ENCODE measurements at regions of chr17 and their contacts with region 1.

Region 1: DNA sequence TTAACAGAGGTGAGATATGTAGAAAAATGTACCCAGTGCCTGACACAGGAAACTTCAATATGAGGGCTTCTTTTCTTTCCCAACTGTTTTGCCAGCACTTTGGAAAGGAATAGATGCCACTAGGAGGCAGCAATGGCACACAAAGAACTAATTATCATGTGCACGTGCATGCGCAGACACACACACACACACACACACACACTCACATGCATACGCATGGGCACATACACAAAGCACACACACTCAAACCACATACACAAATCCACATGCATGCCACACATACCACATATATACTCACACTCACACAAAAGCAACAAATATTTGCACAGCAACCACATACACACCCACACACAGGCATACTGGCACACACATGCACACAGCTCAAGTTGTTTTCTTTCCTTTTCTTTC is 8.8 kb upstream of the CEP112 start:
- DNase-seq: peak; percentile 90
- H3K4me3 ChIP-seq: no peak overlapping the region
- H3K27ac ChIP-seq: no peak overlapping the region
- H3K4me1 ChIP-seq: peaks cover 14% of the 10 kb centered on the region
- H3K27me3 ChIP-seq: no peaks in the 10 kb centered on the region
- CTCF ChIP-seq: peak; percentile 87

Region 2: DNA sequence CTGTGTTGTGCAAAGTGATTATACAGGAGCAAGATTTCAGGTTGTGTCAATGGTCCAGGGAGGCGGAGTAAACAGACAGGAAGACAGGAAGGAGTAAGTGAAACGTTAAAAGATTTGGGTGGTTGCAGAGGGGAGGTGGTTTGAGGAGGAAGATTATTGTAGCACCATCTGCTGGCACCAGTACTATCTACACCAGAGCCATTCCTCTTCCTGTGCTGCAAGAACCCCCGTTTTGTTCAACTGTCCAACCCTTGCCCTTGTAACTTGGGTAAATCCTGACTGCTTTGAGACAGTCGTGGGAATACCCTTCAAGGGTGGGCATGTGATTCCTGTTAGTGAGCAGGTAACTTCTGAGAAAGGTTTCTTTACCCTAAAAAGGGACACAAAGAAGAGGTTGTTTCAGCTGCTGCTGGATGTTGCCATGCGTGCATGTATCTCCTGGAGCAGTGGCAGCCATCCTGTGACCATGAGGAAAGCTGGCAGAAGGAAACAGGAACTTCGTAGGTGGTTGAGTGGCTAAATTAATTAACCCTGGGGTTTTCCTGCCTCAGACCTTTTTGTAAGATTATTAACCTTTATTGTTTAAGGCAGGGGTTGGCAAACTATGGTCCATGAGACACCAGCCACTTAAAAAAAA is 225.8 kb after region 1 on chr17:
- CTCF ChIA-PET with region 1: no interaction called
- POLR2A ChIA-PET with region 1: no interaction called
- intact Hi-C with region 1: loop called (anchors 5 kb)
- DNase-seq: peak; percentile 75
- H3K4me3 ChIP-seq: no peak overlapping the region
- H3K27ac ChIP-seq: no peak overlapping the region
- H3K4me1 ChIP-seq: peaks cover 17% of the 10 kb centered on the region
- H3K27me3 ChIP-seq: no peaks in the 10 kb centered on the region
- CTCF ChIP-seq: peak; percentile 67

Region 3: DNA sequence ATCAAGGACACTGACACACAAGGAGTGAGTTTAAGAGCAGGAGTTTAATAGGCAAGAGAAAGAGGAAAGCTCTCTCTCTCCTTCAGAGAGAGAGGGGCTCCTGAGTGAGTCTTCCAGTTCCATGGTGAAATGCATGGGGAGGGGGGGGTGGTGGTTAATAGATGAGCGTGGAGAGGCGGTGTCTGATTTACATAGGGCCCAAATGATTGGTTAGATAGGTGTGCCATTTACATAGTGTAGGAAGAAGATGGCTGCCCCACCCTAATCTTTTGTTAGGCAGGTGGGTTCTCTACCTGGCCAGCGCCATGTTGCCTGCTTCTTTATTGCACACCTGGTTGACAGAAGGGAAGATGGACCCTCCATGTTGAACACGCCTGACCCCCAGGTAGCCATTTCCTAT is 384.2 kb after region 1 on chr17:
- CTCF ChIA-PET with region 1: interaction called, 13 read pairs
- POLR2A ChIA-PET with region 1: no interaction called
- intact Hi-C with region 1: no loop called
- DNase-seq: no peak
- H3K4me3 ChIP-seq: no peak overlapping the region
- H3K27ac ChIP-seq: no peak overlapping the region
- H3K4me1 ChIP-seq: peaks cover 19% of the 10 kb centered on the region
- H3K27me3 ChIP-seq: no peaks in the 10 kb centered on the region
- CTCF ChIP-seq: no peak

Region 4: GRCh38 chr17:66625311-66625775 is 424.7 kb after region 1 on chr17:
- CTCF ChIA-PET with region 1: no interaction called
- POLR2A ChIA-PET with region 1: no interaction called
- intact Hi-C with region 1: loop called (anchors 1 kb)
- DNase-seq: peak; percentile 70
- H3K4me3 ChIP-seq: no peak overlapping the region
- H3K27ac ChIP-seq: no peak overlapping the region
- H3K4me1 ChIP-seq: peaks cover 4% of the 10 kb centered on the region
- H3K27me3 ChIP-seq: no peaks in the 10 kb centered on the region
- CTCF ChIP-seq: peak; percentile 70

Region 5: GRCh38 chr17:66673668-66674315 is 473.1 kb after region 1 on chr17:
- CTCF ChIA-PET with region 1: interaction called, 5 read pairs
- POLR2A ChIA-PET with region 1: no interaction called
- intact Hi-C with region 1: loop called (anchors 2 kb)
- DNase-seq: peak; percentile 78
- H3K4me3 ChIP-seq: no peak overlapping the region
- H3K27ac ChIP-seq: no peak overlapping the region
- H3K4me1 ChIP-seq: peaks cover 5% of the 10 kb centered on the region
- H3K27me3 ChIP-seq: no peaks in the 10 kb centered on the region
- CTCF ChIP-seq: peak; percentile 82

Measured in A673 (cell line).